Left cardiac atrium (tissue), 4 donors: ENCODE measurements at regions of chr2 and their contacts with region 1.

Region 1: GRCh38 chr2:85797921-85798320 is 44.1 kb downstream of the ATOH8 start:
- DNase-seq: no peak
- ATAC-seq: peak; percentile 40 to 46

Region 2: GRCh38 chr2:85728883-85729824 is 68.8 kb before region 1 on chr2:
- intact Hi-C with region 1: loop called in 1 of 2 experiments (anchors 2 kb)
- DNase-seq: peak; percentile 92
- ATAC-seq: peak; percentile 95 to 97

Region 3: GRCh38 chr2:85750587-85751575 is 47.0 kb before region 1 on chr2:
- intact Hi-C with region 1: loop called in 1 of 2 experiments (anchors 2 kb)
- DNase-seq: peak; percentile 76
- ATAC-seq: peak; percentile 53 to 56